ENCODE measurements at regions of chr18 and their contacts with region 1.

Region 1: DNA sequence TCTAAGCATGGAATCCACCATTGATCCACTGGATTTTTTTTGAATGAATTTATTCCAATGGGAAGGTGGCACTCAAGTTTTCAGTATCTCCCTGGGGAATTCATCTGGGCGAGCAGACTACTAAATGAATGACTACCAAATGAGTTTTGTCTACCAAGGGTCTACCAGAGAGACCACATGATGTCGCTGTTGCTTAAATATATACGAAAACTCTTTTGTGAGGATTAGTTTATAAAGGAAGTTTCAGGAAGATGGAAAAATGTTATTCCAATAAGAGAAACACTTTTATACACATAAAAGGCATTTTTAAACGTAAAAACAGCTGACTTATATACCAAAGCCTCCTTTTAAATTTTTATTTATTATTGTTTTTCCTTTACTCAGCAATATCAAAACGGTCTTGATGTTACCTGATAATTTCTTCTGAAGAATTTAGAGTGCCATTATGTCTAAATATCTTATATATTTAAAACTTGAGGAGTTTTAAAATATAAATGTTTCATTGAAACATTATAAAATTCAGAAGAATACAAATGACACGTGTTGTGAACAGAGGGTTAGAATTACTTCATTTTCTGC is 139.7 kb downstream of the HRH4 start:
- DNase-seq: peak in 3 of 5 donors; percentile 4 to 19 (median 17)
- H3K4me3 ChIP-seq: no peak overlapping the region
- H3K4me3 Mint-ChIP-seq: no peak overlapping the region
- H3K27ac ChIP-seq: no peak overlapping the region
- H3K27ac Mint-ChIP-seq: no peak overlapping the region
- H3K4me1 ChIP-seq: no peaks in the 10 kb centered on the region
- H3K4me1 Mint-ChIP-seq: no peaks in the 10 kb centered on the region
- H3K27me3 ChIP-seq: no peaks in the 10 kb centered on the region
- H3K27me3 Mint-ChIP-seq: peaks cover 7 to 8% of the 10 kb centered on the region in 2 donors

Region 2: GRCh38 chr18:24543805-24544498 is 56.2 kb before region 1 on chr18:
- CTCF ChIA-PET with region 1: no interaction called
- POLR2A ChIA-PET with region 1: no interaction called
- intact Hi-C with region 1: no loop called
- DNase-seq: no peak
- H3K4me3 ChIP-seq: no peak overlapping the region
- H3K4me3 Mint-ChIP-seq: no peak overlapping the region
- H3K27ac ChIP-seq: no peak overlapping the region
- H3K27ac Mint-ChIP-seq: no peak overlapping the region
- H3K4me1 ChIP-seq: no peaks in the 10 kb centered on the region
- H3K4me1 Mint-ChIP-seq: no peaks in the 10 kb centered on the region
- H3K27me3 ChIP-seq: no peaks in the 10 kb centered on the region
- H3K27me3 Mint-ChIP-seq: peaks cover 3 to 12% of the 10 kb centered on the region in 2 donors

Region 3: DNA sequence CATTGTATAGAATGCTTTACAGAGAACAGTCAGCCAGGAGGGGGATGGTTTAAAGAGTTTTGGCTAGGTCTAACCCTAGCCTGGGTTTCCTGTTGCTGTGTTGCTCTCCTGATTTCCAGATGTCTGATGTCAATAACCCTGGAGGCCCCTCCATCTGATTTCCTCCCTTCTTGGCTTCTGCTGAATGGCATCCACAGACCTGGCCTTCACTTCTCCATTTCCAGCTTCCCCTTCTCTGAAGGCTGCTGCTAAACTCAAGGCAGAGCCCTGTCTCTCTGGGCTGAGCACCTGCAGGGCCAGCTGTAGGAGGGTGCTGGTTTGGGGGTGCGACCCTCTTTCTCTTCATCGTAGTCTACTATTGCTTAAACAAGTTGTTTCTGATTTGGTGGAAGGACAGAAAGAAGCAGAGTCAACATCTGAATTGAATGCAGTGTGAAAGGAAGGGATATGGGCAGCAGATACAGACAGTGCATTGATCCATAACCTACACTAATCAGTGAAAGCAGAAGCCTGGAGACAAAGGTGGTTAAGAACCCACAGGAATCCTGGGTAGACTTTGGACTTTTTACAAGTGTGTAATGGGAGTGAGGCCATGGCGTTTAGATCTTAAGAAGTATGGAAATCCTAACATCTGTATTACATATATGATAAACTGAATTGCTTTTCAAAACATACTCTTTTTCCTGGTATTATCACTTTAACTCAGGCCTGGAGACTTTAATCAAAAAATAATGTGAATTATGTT is 13.9 kb after region 1 on chr18:
- CTCF ChIA-PET with region 1: no interaction called
- POLR2A ChIA-PET with region 1: no interaction called
- intact Hi-C with region 1: no loop called
- DNase-seq: no peak
- H3K4me3 ChIP-seq: no peak overlapping the region
- H3K4me3 Mint-ChIP-seq: no peak overlapping the region
- H3K27ac ChIP-seq: no peak overlapping the region
- H3K27ac Mint-ChIP-seq: peak overlapping the region in 1 of 7 donors; percentile 62
- H3K4me1 ChIP-seq: no peaks in the 10 kb centered on the region
- H3K4me1 Mint-ChIP-seq: no peaks in the 10 kb centered on the region
- H3K27me3 ChIP-seq: no peaks in the 10 kb centered on the region
- H3K27me3 Mint-ChIP-seq: peaks cover 0 to under 1% of the 10 kb centered on the region in 2 donors

Region 4: DNA sequence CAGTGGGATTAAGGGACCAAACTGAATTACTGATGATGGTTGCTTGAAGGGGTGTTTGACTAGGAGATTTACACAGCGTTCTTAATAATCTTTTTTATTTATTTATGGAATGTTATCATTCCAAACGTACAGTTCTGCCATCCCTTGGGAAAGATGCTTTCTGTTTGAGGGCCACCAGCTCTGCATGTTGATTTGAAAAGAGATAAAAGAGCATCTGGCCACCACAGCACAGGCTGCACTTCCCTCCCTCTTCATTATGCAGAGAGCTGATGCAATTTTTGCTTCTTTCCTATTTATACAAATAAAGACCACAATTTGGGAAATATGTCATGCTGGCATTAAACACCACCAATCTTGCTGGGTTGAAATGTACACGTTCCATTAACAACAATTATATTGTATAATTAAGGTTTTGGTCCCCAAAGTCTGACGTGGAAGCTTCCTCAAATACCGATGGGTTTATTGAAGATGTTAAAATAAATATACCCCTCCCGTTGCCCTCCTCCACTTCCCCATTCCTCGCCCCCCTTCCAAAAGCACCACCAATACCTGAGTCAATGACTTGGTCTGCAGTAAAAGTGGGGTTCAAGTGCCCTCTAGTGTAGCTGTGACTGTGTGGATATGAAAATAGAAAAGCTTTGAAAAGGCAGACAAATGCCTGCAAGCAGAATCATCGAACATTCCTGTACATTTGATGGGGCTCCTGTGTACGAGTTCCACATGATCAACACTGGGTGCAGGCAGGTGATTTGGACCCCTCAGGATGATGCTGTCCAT is 72.2 kb after region 1 on chr18:
- CTCF ChIA-PET with region 1: interaction called, 3 read pairs
- POLR2A ChIA-PET with region 1: no interaction called
- intact Hi-C with region 1: loop called (anchors 1 kb)
- DNase-seq: peak in 2 of 5 donors; percentile 7 to 8
- H3K4me3 ChIP-seq: no peak overlapping the region
- H3K4me3 Mint-ChIP-seq: no peak overlapping the region
- H3K27ac ChIP-seq: no peak overlapping the region
- H3K27ac Mint-ChIP-seq: no peak overlapping the region
- H3K4me1 ChIP-seq: no peaks in the 10 kb centered on the region
- H3K4me1 Mint-ChIP-seq: no peaks in the 10 kb centered on the region
- H3K27me3 ChIP-seq: no peaks in the 10 kb centered on the region
- H3K27me3 Mint-ChIP-seq: peaks cover 6 to 7% of the 10 kb centered on the region in 2 donors